MCF 10A (cell line): ENCODE measurements at regions of chr16 and their contacts with region 1.

Region 1: GRCh38 chr16:70428178-70428998 is 10.5 kb downstream of the ST3GAL2 start:
- DNase-seq: peak; percentile 92
- H3K4me3 Mint-ChIP-seq: peak overlapping the region; percentile 8
- H3K27ac Mint-ChIP-seq: peak overlapping the region; percentile 75
- H3K4me1 Mint-ChIP-seq: peaks cover 31% of the 10 kb centered on the region
- H3K27me3 Mint-ChIP-seq: no peaks in the 10 kb centered on the region
- CTCF ChIP-seq: no peak

Region 2: GRCh38 chr16:70402916-70403659 is 25.3 kb before region 1 on chr16:
- CTCF ChIA-PET with region 1: no interaction called
- POLR2A ChIA-PET with region 1: no interaction called
- intact Hi-C with region 1: loop called (anchors 1 kb)
- DNase-seq: peak; percentile 76
- H3K4me3 Mint-ChIP-seq: no peak overlapping the region
- H3K27ac Mint-ChIP-seq: peak overlapping the region; percentile 57
- H3K4me1 Mint-ChIP-seq: peaks cover 21% of the 10 kb centered on the region
- H3K27me3 Mint-ChIP-seq: no peaks in the 10 kb centered on the region
- CTCF ChIP-seq: no peak